Naive thymus-derived CD8-positive, alpha-beta T cell (primary cell): ENCODE measurements at regions of chr6 and their contacts with region 1.

Region 1: DNA sequence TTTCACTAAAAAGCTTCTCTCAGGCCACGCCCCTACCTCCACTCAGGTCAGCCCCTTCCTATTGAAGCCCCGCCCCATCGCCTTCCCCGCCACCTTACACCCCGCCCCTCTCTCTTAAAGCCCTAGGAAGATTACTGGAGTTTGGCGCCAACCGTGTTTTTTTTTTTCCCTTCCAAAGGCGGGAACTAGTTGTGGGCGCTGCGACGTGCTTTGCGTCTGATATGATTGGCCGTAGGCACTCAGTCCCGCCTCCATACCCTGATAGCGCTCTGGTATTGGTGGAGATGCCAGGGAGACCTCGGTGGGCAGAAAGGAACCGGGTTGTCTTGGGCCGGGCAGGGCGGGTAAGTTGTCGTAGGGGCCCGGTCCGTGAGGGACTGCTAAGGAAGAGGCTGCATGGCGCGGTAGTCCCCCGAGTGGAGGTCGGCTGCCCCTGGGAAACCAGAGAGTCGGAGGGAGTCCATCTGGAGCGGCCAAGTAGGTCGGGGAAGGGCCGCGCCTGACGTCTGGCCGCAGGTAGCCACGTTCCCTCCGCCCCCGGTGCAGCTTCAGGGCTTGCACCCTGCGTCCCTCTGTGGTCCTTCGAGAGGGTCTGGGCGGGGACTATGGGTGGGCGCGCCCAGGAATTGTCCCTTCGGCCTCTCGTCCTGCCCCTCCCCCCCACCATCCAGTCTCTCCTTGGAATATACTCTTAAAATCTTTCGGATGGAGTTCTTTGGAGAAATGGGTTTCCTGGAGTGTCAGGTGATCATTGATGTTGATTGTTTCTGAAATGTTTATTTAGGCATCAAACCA is at the start of gene CASP8AP2:
- DNase-seq: peak; percentile 77 to 98 (median 94)
- ATAC-seq: peak; percentile 91 to 94
- H3K4me3 Mint-ChIP-seq: peak within 1 kb of the TSS; percentile 95 to 99 (median 98)
- H3K27ac Mint-ChIP-seq: peak within 1 kb of the TSS; percentile 58 to 97 (median 96)
- H3K4me1 Mint-ChIP-seq: peaks cover 10 to 41% (median 38%) of the 10 kb centered on the region in 4 donors
- H3K27me3 Mint-ChIP-seq: no peaks in the 10 kb centered on the region
- polyA plus RNA-seq, gene CASP8AP2: 37.7 to 47.0 (median 42.5) TPM

Region 2: DNA sequence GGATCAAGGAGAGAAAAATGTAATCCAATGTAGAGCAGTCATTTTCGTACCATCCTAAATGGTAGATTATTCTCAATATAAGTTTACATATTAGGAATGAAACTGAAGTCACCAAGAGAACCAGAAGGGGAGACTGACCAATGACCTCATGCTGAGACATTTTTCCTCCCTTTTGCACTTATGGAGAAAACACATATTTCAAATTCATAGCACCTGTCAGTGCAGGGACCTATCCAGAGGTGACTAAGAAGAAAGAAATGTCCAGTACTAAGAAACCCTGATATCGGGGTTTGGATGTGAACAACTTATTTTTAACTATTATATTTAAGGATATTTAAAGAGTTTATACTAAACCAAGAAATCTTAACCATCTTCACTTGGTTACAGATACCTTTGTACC is 174.7 kb before region 1 on chr6:
- POLR2A ChIA-PET with region 1: no interaction called
- DNase-seq: no peak
- ATAC-seq: no peak
- H3K4me3 Mint-ChIP-seq: no peak overlapping the region
- H3K27ac Mint-ChIP-seq: no peak overlapping the region
- H3K4me1 Mint-ChIP-seq: peaks cover 0 to 2% (median 0%) of the 10 kb centered on the region in 4 donors
- H3K27me3 Mint-ChIP-seq: no peaks in the 10 kb centered on the region

Region 3: GRCh38 chr6:89819336-89820130 is 10.3 kb before region 1 on chr6 and contains the start of gene MDN1:
- POLR2A ChIA-PET with region 1: interaction called, 79 read pairs
- DNase-seq: peak; percentile 73 to 91 (median 87)
- ATAC-seq: peak; percentile 93
- H3K4me3 Mint-ChIP-seq: peak within 1 kb of the TSS; percentile 90 to 98 (median 94)
- H3K27ac Mint-ChIP-seq: peak within 1 kb of the TSS; percentile 94 to 99 (median 96)
- H3K4me1 Mint-ChIP-seq: peaks cover 16 to 44% (median 41%) of the 10 kb centered on the region in 4 donors
- H3K27me3 Mint-ChIP-seq: no peaks in the 10 kb centered on the region
- polyA plus RNA-seq, gene MDN1: 3.4 to 10.2 (median 5.0) TPM

Region 4: GRCh38 chr6:89840538-89840937 is 10.8 kb after region 1 on chr6:
- POLR2A ChIA-PET with region 1: interaction called, 10 read pairs
- DNase-seq: no peak
- ATAC-seq: no peak
- H3K4me3 Mint-ChIP-seq: peak overlapping the region in 2 of 10 donors; percentile 11 to 40
- H3K27ac Mint-ChIP-seq: peak overlapping the region in 6 of 10 donors; percentile 2 to 74 (median 60)
- H3K4me1 Mint-ChIP-seq: peaks cover 29 to 60% (median 51%) of the 10 kb centered on the region in 4 donors
- H3K27me3 Mint-ChIP-seq: no peaks in the 10 kb centered on the region